B cell (primary cell): ENCODE measurements at regions of chr9 and their contacts with region 1.

Region 1: DNA sequence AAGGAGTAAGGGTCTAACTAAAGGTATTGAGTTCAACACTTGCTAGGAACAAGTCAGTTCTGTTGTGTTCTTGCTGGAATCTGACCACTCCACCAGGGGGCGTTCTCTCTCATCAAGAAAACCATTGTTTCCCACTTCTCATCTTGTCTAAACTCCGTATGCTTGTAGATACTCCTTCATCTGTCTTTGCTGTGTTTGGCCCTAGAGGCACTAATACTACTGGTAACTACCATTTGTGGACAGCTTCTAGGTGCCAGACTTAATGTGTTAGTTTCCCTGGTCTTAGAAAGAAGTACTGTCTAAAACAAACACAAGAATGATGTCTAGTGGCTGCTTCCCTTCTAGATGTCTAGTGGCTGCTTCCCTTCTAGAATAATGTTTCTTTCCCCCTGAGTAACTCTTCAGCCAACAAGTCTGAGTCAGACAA is 18.7 kb upstream of the PTPDC1 start:
- DNase-seq: peak; percentile 80
- ATAC-seq: peak; percentile 53
- H3K4me3 ChIP-seq: no peak overlapping the region
- H3K4me3 Mint-ChIP-seq: no peak overlapping the region
- H3K27ac ChIP-seq: no peak overlapping the region
- H3K27ac Mint-ChIP-seq: no peak overlapping the region
- H3K4me1 ChIP-seq: peaks cover 4 to 5% of the 10 kb centered on the region in 2 donors
- H3K4me1 Mint-ChIP-seq: peaks cover 6% of the 10 kb centered on the region
- H3K27me3 ChIP-seq: no peaks in the 10 kb centered on the region
- H3K27me3 Mint-ChIP-seq: no peaks in the 10 kb centered on the region
- CTCF ChIP-seq: peak; percentile 90

Region 2: GRCh38 chr9:94014065-94014654 is 51.4 kb before region 1 on chr9:
- CTCF ChIA-PET with region 1: interaction called, 24 read pairs
- POLR2A ChIA-PET with region 1: no interaction called
- intact Hi-C with region 1: no loop called
- DNase-seq: peak; percentile 24
- ATAC-seq: no peak
- H3K4me3 ChIP-seq: no peak overlapping the region
- H3K4me3 Mint-ChIP-seq: no peak overlapping the region
- H3K27ac ChIP-seq: no peak overlapping the region
- H3K27ac Mint-ChIP-seq: no peak overlapping the region
- H3K4me1 ChIP-seq: peaks cover 5 to 6% of the 10 kb centered on the region in 2 donors
- H3K4me1 Mint-ChIP-seq: peaks cover 5% of the 10 kb centered on the region
- H3K27me3 ChIP-seq: peaks cover 0 to 2% (median 0%) of the 10 kb centered on the region in 4 experiments
- H3K27me3 Mint-ChIP-seq: peaks cover 4% of the 10 kb centered on the region
- CTCF ChIP-seq: peak; percentile 70

Region 3: GRCh38 chr9:94157050-94157764 is 91.7 kb after region 1 on chr9:
- CTCF ChIA-PET with region 1: interaction called, 10 read pairs
- POLR2A ChIA-PET with region 1: no interaction called
- intact Hi-C with region 1: no loop called
- DNase-seq: no peak
- ATAC-seq: no peak
- H3K4me3 ChIP-seq: no peak overlapping the region
- H3K4me3 Mint-ChIP-seq: no peak overlapping the region
- H3K27ac ChIP-seq: no peak overlapping the region
- H3K27ac Mint-ChIP-seq: no peak overlapping the region
- H3K4me1 ChIP-seq: peaks cover 35 to 37% of the 10 kb centered on the region in 2 donors
- H3K4me1 Mint-ChIP-seq: peaks cover 38% of the 10 kb centered on the region
- H3K27me3 ChIP-seq: no peaks in the 10 kb centered on the region
- H3K27me3 Mint-ChIP-seq: no peaks in the 10 kb centered on the region
- CTCF ChIP-seq: no peak